ENCODE measurements at regions of chr2 and their contacts with region 1.

Region 1: GRCh38 chr2:231541645-231542044 is 11.4 kb upstream of the NMUR1 start:
- DNase-seq: peak; percentile 86
- ATAC-seq: peak; percentile 99
- H3K4me3 Mint-ChIP-seq: no peak overlapping the region
- H3K27ac Mint-ChIP-seq: no peak overlapping the region
- H3K4me1 Mint-ChIP-seq: no peaks in the 10 kb centered on the region
- H3K27me3 Mint-ChIP-seq: no peaks in the 10 kb centered on the region
- CTCF ChIP-seq: peak; percentile 85

Region 2: DNA sequence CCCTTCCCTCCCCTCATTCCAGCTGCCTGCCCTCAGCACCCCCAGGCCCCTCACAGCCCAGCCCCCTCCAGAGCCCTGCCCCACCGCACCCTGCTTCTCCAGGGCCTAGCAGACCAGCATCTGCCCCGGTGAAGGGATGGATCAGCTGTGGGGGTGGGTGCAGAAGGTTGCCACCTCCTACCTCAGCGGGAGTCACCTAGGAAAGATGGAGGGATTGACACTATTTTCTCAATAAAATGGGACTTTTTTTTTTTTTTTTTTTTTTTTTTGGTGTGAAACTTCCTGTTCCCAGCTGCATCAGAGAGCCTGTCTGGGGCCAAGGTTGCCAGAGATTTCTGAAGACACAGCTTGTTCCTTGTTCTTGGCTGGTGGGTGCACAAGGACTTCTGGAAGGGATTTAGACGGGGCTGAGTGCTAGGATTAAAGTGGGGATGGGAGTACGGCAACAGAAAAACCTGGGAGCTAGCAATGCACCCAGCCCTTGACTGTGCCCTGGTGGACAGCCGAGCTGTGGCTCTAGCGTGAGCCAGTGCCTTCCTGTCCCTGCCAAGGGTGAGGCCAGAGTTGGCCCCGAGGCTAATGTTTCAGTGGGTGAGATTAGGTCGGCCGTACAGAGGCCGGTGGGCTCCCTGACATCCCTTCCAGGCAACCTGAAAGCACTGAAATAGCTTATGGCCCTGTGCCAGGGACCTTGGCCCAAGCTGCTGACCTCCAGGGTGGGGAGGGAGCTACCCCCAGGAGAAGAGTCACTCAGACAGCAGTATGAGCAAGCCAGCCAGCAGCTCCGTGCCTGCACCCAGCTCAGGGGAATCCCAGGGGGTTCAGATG is 141.6 kb before region 1 on chr2:
- CTCF ChIA-PET with region 1: no interaction called
- POLR2A ChIA-PET with region 1: no interaction called
- DNase-seq: no peak
- ATAC-seq: peak; percentile 16
- H3K4me3 Mint-ChIP-seq: no peak overlapping the region
- H3K27ac Mint-ChIP-seq: peak overlapping the region; percentile 86
- H3K4me1 Mint-ChIP-seq: peaks cover 71% of the 10 kb centered on the region
- H3K27me3 Mint-ChIP-seq: no peaks in the 10 kb centered on the region
- CTCF ChIP-seq: no peak

Region 3: DNA sequence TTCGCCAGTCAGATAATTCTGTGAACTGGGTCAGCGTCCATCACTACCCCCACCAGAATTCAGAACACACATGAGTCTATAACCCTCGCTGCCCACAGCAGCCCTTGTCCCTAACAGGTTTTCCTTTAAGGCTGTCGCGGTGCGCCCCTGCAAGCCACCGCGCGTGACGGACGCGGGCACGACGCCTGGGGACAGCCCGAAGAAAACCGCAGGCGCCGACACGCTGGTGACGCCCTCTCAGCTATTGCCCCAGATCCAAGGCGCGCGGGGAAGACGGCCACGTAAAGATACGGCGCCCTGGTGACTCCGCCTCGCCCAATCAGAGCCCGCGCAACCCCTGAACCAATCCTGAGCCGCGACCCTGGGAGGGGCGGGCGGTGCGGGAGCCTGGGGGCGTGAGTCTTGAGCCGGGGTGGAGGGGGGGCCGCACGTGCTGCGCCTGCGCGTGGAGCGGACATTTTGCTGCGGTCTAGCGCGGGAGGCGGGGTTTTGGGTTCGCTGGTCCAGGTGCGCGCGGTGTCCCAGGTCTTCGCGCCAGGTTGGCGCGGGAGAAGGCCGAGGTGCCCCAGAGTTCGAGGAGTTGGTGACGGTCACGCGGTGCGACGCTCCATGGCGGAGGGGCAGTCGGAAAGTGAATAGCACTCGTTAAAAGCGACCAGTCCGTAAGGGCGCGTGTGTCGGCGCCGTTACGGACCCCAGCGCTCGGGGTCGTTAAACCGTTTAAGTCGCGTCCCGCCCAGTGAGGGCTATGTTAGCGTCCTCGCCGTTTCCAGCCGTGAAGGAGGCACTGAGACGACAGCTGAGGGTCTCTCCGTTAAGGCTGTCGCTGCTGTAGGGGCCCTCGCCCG is 27.3 kb before region 1 on chr2:
- CTCF ChIA-PET with region 1: interaction called, 14 read pairs
- POLR2A ChIA-PET with region 1: interaction called, 3 read pairs
- DNase-seq: peak; percentile 97
- ATAC-seq: peak; percentile 98
- H3K4me3 Mint-ChIP-seq: peak overlapping the region; percentile 90
- H3K27ac Mint-ChIP-seq: peak overlapping the region; percentile 99
- H3K4me1 Mint-ChIP-seq: peaks cover 22% of the 10 kb centered on the region
- H3K27me3 Mint-ChIP-seq: peaks cover 11% of the 10 kb centered on the region
- CTCF ChIP-seq: no peak

Region 4: DNA sequence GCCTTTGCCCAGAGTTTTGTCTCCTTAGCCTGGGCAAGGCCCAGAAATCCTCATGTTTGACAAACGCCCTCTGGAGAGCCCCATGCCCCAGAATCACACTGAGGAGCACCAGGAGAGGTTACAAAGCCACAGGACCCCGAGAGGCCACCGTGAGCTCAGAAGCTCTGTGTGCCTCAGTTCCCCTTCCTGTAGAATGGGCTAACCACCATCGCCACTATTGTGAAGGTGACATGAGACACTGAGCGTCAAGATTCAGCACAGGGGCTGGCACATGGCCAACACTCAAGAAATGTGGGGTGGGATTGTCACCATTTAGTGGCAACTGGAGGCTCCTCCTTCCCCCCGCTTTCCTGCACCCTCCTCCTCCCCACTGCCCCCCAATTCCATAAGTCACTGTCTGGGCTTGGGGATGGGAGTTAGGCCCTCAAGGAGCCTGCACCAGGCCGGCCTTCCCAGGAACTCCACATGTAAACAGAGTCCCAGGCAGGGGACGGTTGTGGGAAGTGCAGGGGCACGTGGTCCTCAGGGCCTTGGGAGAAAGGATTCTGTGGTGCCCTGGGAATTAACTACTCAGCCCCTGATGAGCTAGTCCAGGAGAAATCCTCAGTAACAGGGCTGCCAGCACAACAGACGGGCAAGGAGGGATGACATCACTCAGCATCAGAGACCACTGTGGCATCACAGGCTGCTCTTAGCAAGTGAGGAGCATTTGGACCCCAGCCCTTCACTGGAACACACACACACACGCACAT is 10.0 kb before region 1 on chr2:
- CTCF ChIA-PET with region 1: interaction called, 36 read pairs
- POLR2A ChIA-PET with region 1: no interaction called
- DNase-seq: no peak
- ATAC-seq: no peak
- H3K4me3 Mint-ChIP-seq: peak overlapping the region; percentile 49; the same call in 1 of the 2 replicates
- H3K27ac Mint-ChIP-seq: no peak overlapping the region
- H3K4me1 Mint-ChIP-seq: peaks cover 15% of the 10 kb centered on the region
- H3K27me3 Mint-ChIP-seq: peaks cover 35% of the 10 kb centered on the region
- CTCF ChIP-seq: no peak

Region 5: DNA sequence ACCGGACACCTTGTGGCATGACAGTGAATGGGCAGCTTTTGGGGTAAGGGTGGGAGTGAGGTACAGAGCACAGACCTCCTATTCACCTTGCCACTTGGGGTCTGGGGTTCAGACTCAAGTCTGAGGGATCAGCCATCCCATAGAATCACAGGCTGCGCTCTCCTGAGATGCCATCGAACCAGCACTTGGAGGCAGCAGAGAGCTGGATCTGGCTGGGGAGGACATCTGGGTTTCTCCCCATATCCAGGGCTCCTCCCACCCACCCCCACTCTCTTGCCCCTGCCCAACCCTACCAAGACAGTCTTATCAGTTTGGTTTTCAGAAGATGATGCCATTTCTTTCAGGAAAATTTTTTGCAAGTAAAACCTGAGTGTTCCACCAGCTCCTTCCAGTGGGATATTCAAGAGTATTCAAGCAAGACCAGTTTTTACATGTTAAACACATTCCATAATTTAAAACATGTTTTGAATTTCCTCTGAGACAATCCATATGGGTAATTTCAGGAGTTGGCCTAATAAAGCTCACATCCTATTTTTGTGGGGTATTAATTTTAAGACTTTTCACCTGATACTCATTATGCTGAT is 21.8 kb after region 1 on chr2:
- CTCF ChIA-PET with region 1: interaction called, 12 read pairs
- POLR2A ChIA-PET with region 1: no interaction called
- DNase-seq: peak; percentile 82
- ATAC-seq: peak; percentile 99
- H3K4me3 Mint-ChIP-seq: no peak overlapping the region
- H3K27ac Mint-ChIP-seq: peak overlapping the region; percentile 66; the same call in 1 of the 2 replicates
- H3K4me1 Mint-ChIP-seq: peaks cover 11% of the 10 kb centered on the region
- H3K27me3 Mint-ChIP-seq: no peaks in the 10 kb centered on the region
- CTCF ChIP-seq: peak; percentile 54; the same call in 1 of the 2 replicates

Region 6: DNA sequence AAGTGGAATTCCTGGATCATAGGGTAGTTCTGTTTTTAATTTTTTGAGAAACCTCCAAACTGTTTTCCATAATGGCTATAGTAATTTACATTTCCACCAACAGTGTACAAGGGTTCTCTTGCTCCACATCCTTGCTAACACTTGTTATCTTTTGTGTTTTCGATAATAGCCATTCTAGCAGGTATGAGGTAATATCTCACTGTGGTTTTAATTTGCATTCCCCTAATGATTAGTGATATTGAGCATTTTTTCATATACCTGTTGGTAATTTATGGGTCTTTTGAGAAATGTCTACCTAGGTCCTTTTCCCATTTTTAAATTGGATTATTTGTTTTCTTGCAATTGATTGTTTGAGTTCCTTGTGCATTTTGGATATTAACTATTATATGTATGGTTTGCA is 459.4 kb after region 1 on chr2:
- CTCF ChIA-PET with region 1: no interaction called
- POLR2A ChIA-PET with region 1: no interaction called
- DNase-seq: no peak
- ATAC-seq: no peak
- H3K4me3 Mint-ChIP-seq: no peak overlapping the region
- H3K27ac Mint-ChIP-seq: no peak overlapping the region
- H3K4me1 Mint-ChIP-seq: peaks cover 8% of the 10 kb centered on the region
- H3K27me3 Mint-ChIP-seq: no peaks in the 10 kb centered on the region
- CTCF ChIP-seq: no peak

Measured in WTC11 (cell line).